ENCODE measurements at regions of chr10 and their contacts with region 1.

Region 1: DNA sequence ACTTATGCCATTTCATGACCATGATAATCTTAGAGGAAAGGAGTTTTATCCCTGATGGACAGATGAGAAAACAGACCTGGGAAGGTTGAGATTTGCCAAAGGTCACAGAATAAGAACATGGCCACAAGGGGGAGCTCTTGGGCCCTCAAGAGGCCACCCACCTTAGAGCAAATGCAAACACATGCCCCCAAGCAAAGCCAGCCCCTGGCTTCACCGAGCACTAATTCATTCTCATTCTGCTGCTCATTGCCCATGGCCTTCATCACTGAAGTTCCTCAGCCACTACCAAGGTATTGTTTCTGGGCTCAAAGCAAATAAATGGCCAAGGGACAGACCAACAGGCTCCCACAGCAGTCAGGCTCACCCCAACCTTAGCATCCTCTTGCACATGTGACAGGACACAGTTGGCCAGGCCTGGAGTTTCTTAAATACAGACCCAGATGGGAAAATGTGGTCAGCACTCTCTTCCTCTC is 44.2 kb downstream of the PDLIM1 start:
- DNase-seq: peak; percentile 84
- ATAC-seq: peak; percentile 45 to 60

Region 2: GRCh38 chr10:95289003-95289920 is 42.6 kb after region 1 on chr10:
- intact Hi-C with region 1: loop called in 1 of 2 experiments (anchors 5 kb)
- DNase-seq: no peak
- ATAC-seq: peak in 1 of 2 donors; percentile 5

Region 3: DNA sequence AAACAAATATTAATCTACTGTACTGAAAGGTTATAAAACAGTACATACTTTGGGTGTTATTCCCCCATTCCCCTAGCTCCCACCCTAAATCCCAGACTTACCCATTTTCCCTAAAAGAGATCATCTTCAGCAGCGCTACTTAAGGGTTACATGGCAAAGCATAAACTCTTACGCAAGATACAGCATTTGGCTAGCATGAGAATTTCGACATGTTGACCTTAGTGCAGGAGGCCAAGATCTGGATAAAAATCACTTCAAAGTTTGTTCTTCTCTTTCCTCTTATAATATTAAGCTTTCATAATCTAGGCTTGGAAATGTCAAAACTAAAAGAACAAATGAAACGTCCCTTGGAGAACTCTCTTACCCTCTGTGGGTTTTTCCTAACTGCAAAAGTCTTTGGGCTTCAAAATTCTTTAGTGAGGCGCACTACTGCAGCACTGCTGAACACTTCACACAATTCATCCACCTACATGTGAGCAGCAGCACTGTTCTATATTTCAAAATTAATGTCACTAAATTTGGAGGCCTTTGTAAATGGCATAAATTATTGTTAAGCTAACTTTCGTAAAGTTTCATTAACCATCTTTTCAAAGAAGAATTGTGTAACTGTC is 103.7 kb after region 1 on chr10:
- intact Hi-C with region 1: loop called in 1 of 2 experiments (anchors 10 kb)
- DNase-seq: no peak
- ATAC-seq: peak; percentile 54 to 70